ENCODE measurements at regions of chr21 and their contacts with region 1.

Region 1: GRCh38 chr21:19322360-19322759 is 918.8 kb upstream of the TMPRSS15 start:
- DNase-seq: no peak
- H3K4me3 ChIP-seq: peak overlapping the region in 1 of 59 donors; percentile 1
- H3K27ac ChIP-seq: no peak overlapping the region
- H3K27me3 ChIP-seq: no peaks in the 10 kb centered on the region
- CTCF ChIP-seq: peak in 55 of 56 donors; percentile 25 to 80 (median 58)

Region 2: DNA sequence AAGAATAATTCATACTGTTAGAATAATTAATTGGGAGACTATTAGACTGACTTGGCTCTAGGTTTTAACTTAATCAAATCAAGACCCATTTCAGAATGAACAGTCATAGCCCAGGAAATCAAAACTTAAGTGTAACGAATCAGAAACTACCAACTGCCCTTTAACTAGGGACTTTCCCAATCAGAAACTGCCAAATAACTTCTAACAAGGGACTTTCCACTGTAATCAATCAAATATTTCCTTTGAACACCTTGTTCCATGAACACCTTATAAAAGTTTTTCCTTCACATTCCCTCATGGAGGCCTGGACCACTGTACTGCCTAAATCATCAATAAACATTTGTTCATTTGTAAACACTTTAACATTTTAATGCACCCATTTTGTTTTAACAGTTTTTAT is 135.9 kb after region 1 on chr21:
- intact Hi-C with region 1: no loop called
- DNase-seq: no peak
- H3K4me3 ChIP-seq: no peak overlapping the region
- H3K27ac ChIP-seq: no peak overlapping the region
- H3K27me3 ChIP-seq: no peaks in the 10 kb centered on the region
- CTCF ChIP-seq: no peak

Region 3: DNA sequence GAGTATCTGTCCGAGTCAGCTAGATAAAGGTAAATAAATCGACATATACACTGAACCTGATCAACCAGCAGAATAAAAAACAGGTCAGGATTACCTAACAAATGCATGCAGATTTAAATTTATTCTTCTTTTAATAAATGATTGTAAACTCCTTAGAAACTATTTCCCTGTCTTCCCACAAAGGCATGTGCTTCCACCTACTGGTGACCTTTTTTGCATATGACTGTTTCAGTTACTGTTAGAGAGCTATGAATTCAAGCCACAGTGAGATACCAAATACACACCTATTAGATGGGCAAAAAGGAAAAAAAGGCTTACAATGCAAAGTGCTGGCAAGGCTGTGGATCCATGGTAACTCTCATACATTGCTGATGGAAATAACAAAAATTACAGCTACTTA is 718.4 kb after region 1 on chr21:
- intact Hi-C with region 1: loop called in 1 of 2 experiments (anchors 5 kb)
- DNase-seq: no peak
- H3K4me3 ChIP-seq: no peak overlapping the region
- H3K27ac ChIP-seq: no peak overlapping the region
- H3K27me3 ChIP-seq: no peaks in the 10 kb centered on the region
- CTCF ChIP-seq: peak in 41 of 56 donors; percentile 11 to 61 (median 39)

Region 4: GRCh38 chr21:20469361-20469760 is 1147.0 kb after region 1 on chr21:
- intact Hi-C with region 1: no loop called
- DNase-seq: no peak
- H3K4me3 ChIP-seq: no peak overlapping the region
- H3K27ac ChIP-seq: no peak overlapping the region
- H3K27me3 ChIP-seq: no peaks in the 10 kb centered on the region
- CTCF ChIP-seq: no peak